B cell (primary cell): ENCODE measurements at regions of chr14 and their contacts with region 1.

Region 1: DNA sequence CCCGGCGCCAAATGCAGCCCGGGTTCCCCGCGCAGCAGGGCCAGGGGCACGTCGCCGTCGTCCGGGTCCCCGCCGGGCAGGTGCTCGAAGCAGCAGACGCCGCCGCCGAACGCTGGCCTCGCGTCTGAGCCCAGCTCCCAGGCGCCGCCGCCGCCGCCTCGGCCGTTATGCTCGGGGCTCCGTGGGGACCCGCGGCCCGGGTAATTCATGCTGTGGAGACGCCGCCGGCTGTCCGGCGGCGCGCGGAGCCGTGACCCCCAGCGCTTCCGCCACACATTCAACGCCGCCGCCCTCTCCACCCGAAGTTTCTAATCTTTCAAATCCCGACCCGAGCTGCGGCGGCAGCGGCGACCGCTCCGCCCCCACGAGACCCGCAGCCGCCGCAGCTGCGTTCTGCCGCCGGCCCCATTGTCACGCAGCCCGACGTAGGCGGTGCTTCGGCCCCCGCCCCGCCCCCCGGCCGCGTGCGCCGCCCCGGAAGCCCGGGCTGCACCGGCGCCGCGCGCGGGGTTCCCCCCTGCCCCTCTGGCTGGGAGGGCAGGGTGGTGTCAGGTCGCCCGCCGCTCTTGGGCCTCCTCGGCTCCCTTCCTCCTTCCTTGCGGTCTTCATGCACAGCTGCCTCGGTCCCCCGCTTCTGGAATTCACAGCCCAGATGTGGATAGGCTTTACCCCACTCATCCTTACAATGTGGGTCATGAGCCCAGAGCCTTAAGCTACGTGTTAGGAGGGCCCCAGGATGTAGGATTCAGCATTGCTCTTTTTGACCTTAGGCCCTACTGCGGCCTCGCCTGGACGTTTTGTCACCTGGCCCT is at the start of gene DDHD1:
- DNase-seq: peak; percentile 94
- ATAC-seq: peak; percentile 84
- H3K4me3 ChIP-seq: peak within 1 kb of the TSS; percentile 65 to 85 (median 78)
- H3K4me3 Mint-ChIP-seq: peak within 1 kb of the TSS; percentile 99
- H3K27ac ChIP-seq: peak within 1 kb of the TSS; percentile 86 to 96
- H3K27ac Mint-ChIP-seq: peak within 1 kb of the TSS; percentile 99
- H3K4me1 ChIP-seq: peaks cover 29 to 39% of the 10 kb centered on the region in 2 donors
- H3K4me1 Mint-ChIP-seq: peaks cover 44% of the 10 kb centered on the region
- H3K27me3 ChIP-seq: no peaks in the 10 kb centered on the region
- H3K27me3 Mint-ChIP-seq: no peaks in the 10 kb centered on the region
- CTCF ChIP-seq: no peak
- total RNA-seq, gene DDHD1: 75.4 and 75.8 TPM in 2 replicates

Region 2: GRCh38 chr14:52729925-52730667 is 423.0 kb before region 1 on chr14 and contains the start of gene STYX:
- CTCF ChIA-PET with region 1: no interaction called
- POLR2A ChIA-PET with region 1: no interaction called
- intact Hi-C with region 1: loop called (anchors 1 kb)
- DNase-seq: peak; percentile 98
- ATAC-seq: peak; percentile 96
- H3K4me3 ChIP-seq: peak within 1 kb of the TSS; percentile 75 to 99 (median 84)
- H3K4me3 Mint-ChIP-seq: peak within 1 kb of the TSS; percentile 93
- H3K27ac ChIP-seq: peak within 1 kb of the TSS; percentile 73 to 87
- H3K27ac Mint-ChIP-seq: peak within 1 kb of the TSS; percentile 93
- H3K4me1 ChIP-seq: peaks cover 14 to 16% of the 10 kb centered on the region in 2 donors
- H3K4me1 Mint-ChIP-seq: peaks cover 41% of the 10 kb centered on the region
- H3K27me3 ChIP-seq: no peaks in the 10 kb centered on the region
- H3K27me3 Mint-ChIP-seq: no peaks in the 10 kb centered on the region
- CTCF ChIP-seq: no peak
- total RNA-seq, gene STYX: 15.5 and 15.7 TPM in 2 replicates

Region 3: GRCh38 chr14:52950898-52951689 is 202.0 kb before region 1 on chr14 and contains the start of gene FERMT2:
- CTCF ChIA-PET with region 1: no interaction called
- POLR2A ChIA-PET with region 1: no interaction called
- intact Hi-C with region 1: loop called (anchors 10 kb)
- DNase-seq: no peak
- ATAC-seq: peak; percentile 56
- H3K4me3 ChIP-seq: peak within 1 kb of the TSS; percentile 32 to 64 (median 57)
- H3K4me3 Mint-ChIP-seq: peak within 1 kb of the TSS; percentile 94
- H3K27ac ChIP-seq: no peak within 1 kb of the TSS
- H3K27ac Mint-ChIP-seq: no peak within 1 kb of the TSS
- H3K4me1 ChIP-seq: peaks cover 24 to 27% of the 10 kb centered on the region in 2 donors
- H3K4me1 Mint-ChIP-seq: peaks cover 20% of the 10 kb centered on the region
- H3K27me3 ChIP-seq: peaks cover 6 to 48% (median 32%) of the 10 kb centered on the region in 4 experiments
- H3K27me3 Mint-ChIP-seq: peaks cover 49% of the 10 kb centered on the region
- CTCF ChIP-seq: no peak
- total RNA-seq, gene FERMT2: 0.05 TPM in 1 of 2 replicates, not detected in the other

Region 4: GRCh38 chr14:53109105-53110041 is 43.7 kb before region 1 on chr14:
- CTCF ChIA-PET with region 1: interaction called, 10 read pairs
- POLR2A ChIA-PET with region 1: interaction called, 3 read pairs
- intact Hi-C with region 1: loop called (anchors 1 kb)
- DNase-seq: peak; percentile 76
- ATAC-seq: peak; percentile 31
- H3K4me3 ChIP-seq: peak overlapping the region; percentile 28 to 69 (median 61)
- H3K4me3 Mint-ChIP-seq: no peak overlapping the region
- H3K27ac ChIP-seq: peak overlapping the region; percentile 80 to 81
- H3K27ac Mint-ChIP-seq: no peak overlapping the region
- H3K4me1 ChIP-seq: peaks cover 15 to 26% of the 10 kb centered on the region in 2 donors
- H3K4me1 Mint-ChIP-seq: peaks cover 2% of the 10 kb centered on the region
- H3K27me3 ChIP-seq: no peaks in the 10 kb centered on the region
- H3K27me3 Mint-ChIP-seq: no peaks in the 10 kb centered on the region
- CTCF ChIP-seq: no peak

Region 5: GRCh38 chr14:53217295-53217994 is 64.3 kb after region 1 on chr14:
- CTCF ChIA-PET with region 1: interaction called, 7 read pairs
- POLR2A ChIA-PET with region 1: interaction called, 9 read pairs
- intact Hi-C with region 1: loop called (anchors 1 kb)
- DNase-seq: peak; percentile 82
- ATAC-seq: peak; percentile 98
- H3K4me3 ChIP-seq: peak overlapping the region in 4 of 5 experiments; percentile 48 to 68 (median 63)
- H3K4me3 Mint-ChIP-seq: peak overlapping the region; percentile 93
- H3K27ac ChIP-seq: peak overlapping the region in 1 of 2 donors; percentile 2
- H3K27ac Mint-ChIP-seq: peak overlapping the region; percentile 86
- H3K4me1 ChIP-seq: peaks cover 6 to 8% of the 10 kb centered on the region in 2 donors
- H3K4me1 Mint-ChIP-seq: peaks cover 8% of the 10 kb centered on the region
- H3K27me3 ChIP-seq: no peaks in the 10 kb centered on the region
- H3K27me3 Mint-ChIP-seq: no peaks in the 10 kb centered on the region
- CTCF ChIP-seq: peak; percentile 65

Region 6: DNA sequence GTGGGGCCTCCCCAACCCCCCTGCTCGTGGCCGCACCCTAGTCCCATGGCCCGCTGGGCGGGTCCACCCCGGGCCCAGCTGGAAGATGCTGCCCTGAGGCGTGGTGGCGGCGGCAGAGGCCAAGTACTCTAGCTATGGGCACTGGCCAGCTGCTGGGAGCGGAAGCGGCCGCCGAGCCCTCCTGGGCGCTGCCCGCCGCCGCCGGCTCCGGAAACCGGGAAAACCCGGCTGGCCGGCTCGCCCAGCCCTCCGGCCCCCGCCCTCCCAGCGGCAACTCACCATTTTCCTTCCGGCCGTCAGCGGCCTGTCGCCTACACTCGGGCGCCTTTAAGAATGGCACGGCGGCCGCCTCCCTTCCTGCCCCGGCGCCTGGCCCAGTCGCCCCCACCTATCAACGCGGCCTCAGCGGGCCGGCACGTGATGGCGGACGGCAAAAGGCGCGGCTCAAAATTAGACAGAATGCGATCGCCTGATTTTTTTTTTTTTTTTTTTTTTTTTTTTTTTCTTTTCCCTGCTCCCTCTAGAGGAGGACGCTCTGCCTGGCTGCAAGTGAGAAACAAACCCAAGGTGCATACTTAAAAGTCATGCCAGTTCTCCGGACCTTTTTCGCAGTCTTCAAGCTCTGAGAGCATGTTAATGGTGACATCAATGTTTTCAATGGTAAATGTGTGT is 1335.7 kb after region 1 on chr14 and contains the start of gene GMFB:
- CTCF ChIA-PET with region 1: no interaction called
- POLR2A ChIA-PET with region 1: no interaction called
- intact Hi-C with region 1: loop called (anchors 5 kb)
- DNase-seq: peak; percentile 92
- ATAC-seq: peak; percentile 96
- H3K4me3 ChIP-seq: peak within 1 kb of the TSS; percentile 69 to 97 (median 83)
- H3K4me3 Mint-ChIP-seq: peak within 1 kb of the TSS; percentile 97
- H3K27ac ChIP-seq: peak within 1 kb of the TSS; percentile 82 to 97
- H3K27ac Mint-ChIP-seq: peak within 1 kb of the TSS; percentile 98
- H3K4me1 ChIP-seq: peaks cover 41 to 52% of the 10 kb centered on the region in 2 donors
- H3K4me1 Mint-ChIP-seq: peaks cover 57% of the 10 kb centered on the region
- H3K27me3 ChIP-seq: no peaks in the 10 kb centered on the region
- H3K27me3 Mint-ChIP-seq: no peaks in the 10 kb centered on the region
- CTCF ChIP-seq: no peak
- total RNA-seq, gene GMFB: 42.6 and 49.8 TPM in 2 replicates